Activated CD4-positive, alpha-beta T cell treated with anti-CD3 and anti-CD28 coated beads for 36 hours (primary cell): ENCODE measurements at regions of chr20 and their contacts with region 1.

Region 1: GRCh38 chr20:32357869-32358631 is at the start of gene ASXL1:
- DNase-seq: peak; percentile 98
- ATAC-seq: peak; percentile 82
- H3K4me3 Mint-ChIP-seq: peak within 1 kb of the TSS; percentile 99
- H3K27ac Mint-ChIP-seq: peak within 1 kb of the TSS; percentile 100
- H3K4me1 Mint-ChIP-seq: peaks cover 68% of the 10 kb centered on the region
- H3K27me3 Mint-ChIP-seq: no peaks in the 10 kb centered on the region
- total RNA-seq, gene ASXL1: 129 to 141 TPM

Region 2: GRCh38 chr20:32109392-32110172 is 248.5 kb before region 1 on chr20 and contains the start of gene TM9SF4:
- CTCF ChIA-PET with region 1: no interaction called
- POLR2A ChIA-PET with region 1: interaction called, 3 read pairs
- intact Hi-C with region 1: loop called in 1 of 2 experiments (anchors 1 kb)
- DNase-seq: peak; percentile 93
- ATAC-seq: peak; percentile 88
- H3K4me3 Mint-ChIP-seq: peak within 1 kb of the TSS; percentile 97
- H3K27ac Mint-ChIP-seq: peak within 1 kb of the TSS; percentile 99
- H3K4me1 Mint-ChIP-seq: peaks cover 34% of the 10 kb centered on the region
- H3K27me3 Mint-ChIP-seq: no peaks in the 10 kb centered on the region
- total RNA-seq, gene TM9SF4: 43.2 to 66.5 TPM

Region 3: DNA sequence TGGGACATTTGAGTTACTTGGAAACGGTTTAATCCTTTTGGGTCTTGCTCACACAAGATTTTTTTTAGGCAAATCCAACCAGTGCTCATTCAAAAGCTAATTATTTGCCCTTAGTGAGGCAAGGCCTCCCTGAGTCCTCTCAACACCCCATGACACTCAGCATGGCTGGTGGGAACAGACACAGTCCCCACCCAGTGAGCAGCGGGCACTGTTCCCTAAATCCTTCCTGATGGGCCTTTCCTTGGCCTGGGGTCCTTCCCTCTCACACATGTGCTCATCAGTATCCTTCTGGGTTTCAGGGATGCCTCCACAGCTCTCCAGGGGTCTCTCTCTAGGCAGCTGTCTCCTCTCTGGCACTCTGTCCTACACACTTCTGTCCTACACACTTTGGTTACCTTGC is 178.5 kb before region 1 on chr20:
- CTCF ChIA-PET with region 1: no interaction called
- POLR2A ChIA-PET with region 1: no interaction called
- intact Hi-C with region 1: no loop called
- DNase-seq: no peak
- ATAC-seq: no peak
- H3K4me3 Mint-ChIP-seq: no peak overlapping the region
- H3K27ac Mint-ChIP-seq: no peak overlapping the region
- H3K4me1 Mint-ChIP-seq: no peaks in the 10 kb centered on the region
- H3K27me3 Mint-ChIP-seq: no peaks in the 10 kb centered on the region

Region 4: GRCh38 chr20:32277361-32278198 is 80.5 kb before region 1 on chr20 and contains the start of gene KIF3B:
- CTCF ChIA-PET with region 1: no interaction called
- POLR2A ChIA-PET with region 1: no interaction called
- intact Hi-C with region 1: loop called in 1 of 2 experiments (anchors 1 kb)
- DNase-seq: peak; percentile 93
- ATAC-seq: peak; percentile 81
- H3K4me3 Mint-ChIP-seq: peak within 1 kb of the TSS; percentile 91
- H3K27ac Mint-ChIP-seq: peak within 1 kb of the TSS; percentile 98
- H3K4me1 Mint-ChIP-seq: peaks cover 58% of the 10 kb centered on the region
- H3K27me3 Mint-ChIP-seq: no peaks in the 10 kb centered on the region
- total RNA-seq, gene KIF3B: 39.9 to 40.7 TPM

Region 5: GRCh38 chr20:32336918-32337347 is 21.1 kb before region 1 on chr20:
- CTCF ChIA-PET with region 1: interaction called, 8 read pairs
- POLR2A ChIA-PET with region 1: interaction called, 14 read pairs
- intact Hi-C with region 1: loop called (anchors 1 kb)
- DNase-seq: no peak
- ATAC-seq: no peak
- H3K4me3 Mint-ChIP-seq: no peak overlapping the region
- H3K27ac Mint-ChIP-seq: no peak overlapping the region
- H3K4me1 Mint-ChIP-seq: peaks cover 41% of the 10 kb centered on the region
- H3K27me3 Mint-ChIP-seq: no peaks in the 10 kb centered on the region

Region 6: DNA sequence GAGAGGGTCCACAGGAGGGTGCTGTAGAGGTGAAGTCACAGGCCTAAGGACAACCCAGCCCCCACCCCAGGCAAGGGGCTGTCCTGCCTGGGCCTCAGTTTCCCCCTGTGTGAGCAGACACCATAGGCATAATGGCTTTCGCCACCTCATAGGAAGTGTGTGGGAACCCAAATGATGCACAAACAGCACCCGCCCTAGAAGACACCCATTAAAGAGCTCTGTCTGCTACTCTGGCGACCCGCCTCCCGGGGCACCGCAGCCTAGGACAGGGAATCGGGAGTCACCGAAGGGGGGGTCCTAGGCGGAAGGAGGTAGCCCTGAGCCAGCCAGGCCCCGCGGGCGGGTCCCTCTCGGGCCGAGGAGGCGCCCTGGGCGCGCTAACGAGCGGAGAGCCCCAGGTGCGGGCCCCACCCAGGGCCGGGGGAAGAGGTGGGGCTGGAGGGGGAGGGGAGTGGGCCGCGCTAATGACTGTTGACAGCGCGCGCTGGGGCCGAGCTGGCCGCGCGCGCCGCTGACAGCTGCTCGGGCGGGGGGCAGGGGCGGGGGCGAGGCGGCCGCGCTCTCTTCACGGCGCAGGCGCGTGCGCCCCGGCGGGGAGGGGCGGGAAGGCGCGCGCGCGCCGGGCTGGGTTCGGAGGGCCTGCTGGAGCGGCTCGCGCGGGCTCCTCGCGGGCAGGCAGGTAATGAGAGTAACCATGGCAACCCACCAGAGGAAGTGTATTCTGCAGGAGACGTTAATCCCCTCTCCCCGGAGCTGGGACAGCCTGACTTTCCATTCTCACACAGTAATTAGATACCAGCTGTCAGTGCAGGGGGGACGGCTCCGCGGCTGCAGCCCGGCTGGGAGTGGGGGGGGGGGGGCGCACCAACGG is 178.1 kb after region 1 on chr20:
- CTCF ChIA-PET with region 1: interaction called, 4 read pairs
- POLR2A ChIA-PET with region 1: no interaction called
- intact Hi-C with region 1: loop called in 1 of 2 experiments (anchors 1 kb)
- DNase-seq: peak; percentile 88
- ATAC-seq: peak; percentile 27
- H3K4me3 Mint-ChIP-seq: peak overlapping the region; percentile 72
- H3K27ac Mint-ChIP-seq: peak overlapping the region; percentile 95
- H3K4me1 Mint-ChIP-seq: peaks cover 82% of the 10 kb centered on the region
- H3K27me3 Mint-ChIP-seq: no peaks in the 10 kb centered on the region